Activated CD8-positive, alpha-beta T cell treated with anti-CD3 and anti-CD28 coated beads, Interleukin-2, amount 10 ng/mL, durations not matched to agents 7 days and 5 days (primary cell): ENCODE measurements at regions of chr10 and their contacts with region 1.

Region 1: DNA sequence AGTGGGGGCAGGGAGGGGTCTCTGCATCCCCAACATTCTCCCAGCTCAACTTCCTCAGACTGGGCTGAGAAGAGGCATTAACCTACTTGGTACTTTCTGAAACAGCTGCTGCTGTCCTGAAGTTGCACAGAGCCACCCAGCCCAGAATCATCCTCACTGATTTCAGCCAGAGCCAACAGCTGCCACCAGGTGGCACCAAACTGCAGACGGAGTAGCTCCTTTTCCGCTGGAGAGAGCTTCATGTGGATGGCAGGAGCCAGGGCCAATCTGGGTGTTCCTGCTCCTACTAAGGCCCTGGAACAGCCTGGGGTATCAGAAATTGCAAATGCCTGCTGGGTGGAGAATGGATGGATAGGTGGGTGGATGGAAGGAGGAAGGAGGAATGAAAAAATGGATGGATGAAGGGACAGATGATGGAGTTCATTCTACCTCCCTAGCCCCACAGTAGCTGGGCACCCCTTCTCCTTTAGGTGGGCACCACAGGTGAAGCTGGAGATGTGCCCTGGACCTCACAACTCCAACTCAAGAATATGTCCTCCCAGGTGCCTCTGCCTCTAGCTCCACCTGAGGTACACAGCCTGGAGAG is 11.8 kb upstream of the DRGX start:
- DNase-seq: peak; percentile 83
- ATAC-seq: peak; percentile 87
- H3K4me3 Mint-ChIP-seq: no peak overlapping the region
- H3K27ac Mint-ChIP-seq: no peak overlapping the region
- H3K4me1 Mint-ChIP-seq: no peaks in the 10 kb centered on the region
- H3K27me3 Mint-ChIP-seq: peaks cover 41% of the 10 kb centered on the region

Region 2: DNA sequence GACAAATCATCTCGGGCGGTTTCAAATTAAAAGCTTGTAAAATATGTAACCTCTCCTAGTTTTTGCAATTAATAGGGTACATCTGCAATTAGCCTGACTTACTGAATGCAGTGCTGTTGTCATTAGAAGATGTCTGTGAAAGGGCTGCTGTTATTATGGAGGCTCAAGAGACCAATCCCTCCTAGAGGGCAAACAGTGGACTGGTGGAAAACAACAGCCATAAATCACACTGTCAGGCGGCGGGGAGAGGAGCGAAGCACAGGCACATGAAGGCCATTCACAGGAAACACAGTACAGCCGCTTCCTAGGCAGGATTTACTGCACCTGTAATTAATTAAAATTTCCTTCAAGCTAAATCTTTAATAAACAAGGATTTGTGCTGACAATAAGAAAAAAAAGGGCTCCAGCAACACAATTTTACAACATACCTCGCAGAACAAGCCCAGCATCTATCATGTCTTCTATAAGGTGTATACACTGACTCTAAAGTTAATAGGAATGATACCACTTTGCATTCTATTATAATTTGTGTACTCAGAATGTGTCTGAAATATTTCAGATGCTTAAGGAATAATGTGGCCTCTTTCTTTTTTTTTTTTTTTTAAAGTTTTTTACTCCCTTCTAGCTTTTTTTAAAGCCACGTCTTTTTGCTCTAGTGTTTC is 80.5 kb after region 1 on chr10:
- CTCF ChIA-PET with region 1: interaction called, 11 read pairs
- POLR2A ChIA-PET with region 1: interaction called, 3 read pairs
- DNase-seq: no peak
- ATAC-seq: no peak
- H3K4me3 Mint-ChIP-seq: no peak overlapping the region
- H3K27ac Mint-ChIP-seq: no peak overlapping the region
- H3K4me1 Mint-ChIP-seq: peaks cover 23% of the 10 kb centered on the region
- H3K27me3 Mint-ChIP-seq: no peaks in the 10 kb centered on the region

Region 3: DNA sequence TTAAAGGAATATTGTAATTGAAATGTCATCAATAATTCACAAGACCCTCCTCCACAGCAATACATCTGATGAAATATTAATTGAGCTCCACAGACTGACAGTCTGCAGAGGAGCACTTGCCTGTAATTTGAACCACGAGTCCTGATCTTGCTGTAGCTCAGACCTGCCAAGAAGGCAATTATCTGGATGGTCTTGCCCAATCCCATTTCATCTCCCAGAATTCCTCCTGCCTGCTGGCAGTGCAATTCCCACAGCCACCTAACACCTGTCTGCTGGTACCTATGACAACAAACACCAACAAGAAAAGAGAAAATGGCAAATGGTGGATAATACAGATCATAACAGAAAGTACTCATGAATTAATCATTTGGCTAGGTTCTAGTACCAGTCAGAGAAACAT is 92.8 kb after region 1 on chr10:
- CTCF ChIA-PET with region 1: interaction called, 14 read pairs
- POLR2A ChIA-PET with region 1: no interaction called
- DNase-seq: no peak
- ATAC-seq: no peak
- H3K4me3 Mint-ChIP-seq: no peak overlapping the region
- H3K27ac Mint-ChIP-seq: no peak overlapping the region
- H3K4me1 Mint-ChIP-seq: peaks cover 12% of the 10 kb centered on the region
- H3K27me3 Mint-ChIP-seq: no peaks in the 10 kb centered on the region

Region 4: DNA sequence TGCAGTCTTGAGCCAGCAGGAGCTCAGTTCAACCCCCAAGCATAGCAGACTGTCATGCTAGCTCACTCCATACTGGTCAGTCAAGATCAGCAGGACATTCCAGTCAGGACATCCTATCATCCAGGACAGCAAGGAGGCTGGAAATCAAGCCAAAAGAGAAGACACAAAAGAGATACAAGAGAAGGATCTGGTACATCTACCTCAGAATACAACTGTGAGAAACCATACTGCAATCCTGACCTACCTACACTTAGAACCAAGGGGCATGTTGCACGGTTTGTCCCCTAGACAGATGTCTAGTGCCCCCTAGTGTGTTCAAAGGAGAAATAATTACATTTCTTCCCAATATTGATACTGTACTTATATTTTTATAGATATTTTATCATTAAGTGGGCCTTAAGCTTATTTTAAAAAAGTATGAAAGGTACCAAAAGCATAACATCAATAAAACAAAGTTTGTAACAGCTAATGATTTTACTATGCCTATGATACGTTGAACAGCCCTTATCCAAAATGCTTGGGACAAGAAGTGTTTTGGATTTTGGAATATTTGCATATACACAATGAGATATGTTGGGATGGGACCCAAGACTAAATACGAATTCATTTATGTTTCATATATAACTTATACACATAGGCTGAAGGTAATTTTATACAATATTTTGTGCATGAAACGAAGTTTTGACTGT is 104.6 kb after region 1 on chr10:
- CTCF ChIA-PET with region 1: interaction called, 224 read pairs
- POLR2A ChIA-PET with region 1: no interaction called
- DNase-seq: peak; percentile 47
- ATAC-seq: peak; percentile 51
- H3K4me3 Mint-ChIP-seq: no peak overlapping the region
- H3K27ac Mint-ChIP-seq: no peak overlapping the region
- H3K4me1 Mint-ChIP-seq: peaks cover 26% of the 10 kb centered on the region
- H3K27me3 Mint-ChIP-seq: peaks cover 4% of the 10 kb centered on the region

Region 5: GRCh38 chr10:49518982-49519578 is 111.4 kb after region 1 on chr10:
- CTCF ChIA-PET with region 1: interaction called, 224 read pairs
- POLR2A ChIA-PET with region 1: interaction called, 4 read pairs
- DNase-seq: peak; percentile 60
- ATAC-seq: no peak
- H3K4me3 Mint-ChIP-seq: no peak overlapping the region
- H3K27ac Mint-ChIP-seq: no peak overlapping the region
- H3K4me1 Mint-ChIP-seq: peaks cover 2% of the 10 kb centered on the region
- H3K27me3 Mint-ChIP-seq: no peaks in the 10 kb centered on the region

Region 6: DNA sequence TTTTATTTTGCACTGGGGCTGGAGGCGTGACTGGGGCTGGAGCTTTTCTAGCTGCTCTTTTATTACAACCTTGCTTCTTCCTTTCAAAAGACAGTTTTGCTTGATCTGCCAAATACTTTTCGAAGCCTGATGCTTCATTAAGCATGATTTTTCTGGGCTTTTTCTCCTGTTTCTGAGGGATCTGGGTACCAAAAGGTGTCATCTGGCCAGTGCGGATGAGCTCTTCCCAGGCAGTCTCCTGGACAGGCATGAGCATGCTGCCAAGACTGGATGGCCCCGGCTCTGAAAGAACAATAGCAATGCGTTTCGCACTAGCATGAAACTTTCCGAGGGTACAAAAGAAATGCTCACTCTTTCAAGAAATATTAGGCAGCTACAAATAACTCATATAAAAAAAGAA is 116.9 kb after region 1 on chr10:
- CTCF ChIA-PET with region 1: interaction called, 34 read pairs
- POLR2A ChIA-PET with region 1: interaction called, 4 read pairs
- DNase-seq: no peak
- ATAC-seq: no peak
- H3K4me3 Mint-ChIP-seq: no peak overlapping the region
- H3K27ac Mint-ChIP-seq: no peak overlapping the region
- H3K4me1 Mint-ChIP-seq: peaks cover 2% of the 10 kb centered on the region
- H3K27me3 Mint-ChIP-seq: no peaks in the 10 kb centered on the region

Region 7: DNA sequence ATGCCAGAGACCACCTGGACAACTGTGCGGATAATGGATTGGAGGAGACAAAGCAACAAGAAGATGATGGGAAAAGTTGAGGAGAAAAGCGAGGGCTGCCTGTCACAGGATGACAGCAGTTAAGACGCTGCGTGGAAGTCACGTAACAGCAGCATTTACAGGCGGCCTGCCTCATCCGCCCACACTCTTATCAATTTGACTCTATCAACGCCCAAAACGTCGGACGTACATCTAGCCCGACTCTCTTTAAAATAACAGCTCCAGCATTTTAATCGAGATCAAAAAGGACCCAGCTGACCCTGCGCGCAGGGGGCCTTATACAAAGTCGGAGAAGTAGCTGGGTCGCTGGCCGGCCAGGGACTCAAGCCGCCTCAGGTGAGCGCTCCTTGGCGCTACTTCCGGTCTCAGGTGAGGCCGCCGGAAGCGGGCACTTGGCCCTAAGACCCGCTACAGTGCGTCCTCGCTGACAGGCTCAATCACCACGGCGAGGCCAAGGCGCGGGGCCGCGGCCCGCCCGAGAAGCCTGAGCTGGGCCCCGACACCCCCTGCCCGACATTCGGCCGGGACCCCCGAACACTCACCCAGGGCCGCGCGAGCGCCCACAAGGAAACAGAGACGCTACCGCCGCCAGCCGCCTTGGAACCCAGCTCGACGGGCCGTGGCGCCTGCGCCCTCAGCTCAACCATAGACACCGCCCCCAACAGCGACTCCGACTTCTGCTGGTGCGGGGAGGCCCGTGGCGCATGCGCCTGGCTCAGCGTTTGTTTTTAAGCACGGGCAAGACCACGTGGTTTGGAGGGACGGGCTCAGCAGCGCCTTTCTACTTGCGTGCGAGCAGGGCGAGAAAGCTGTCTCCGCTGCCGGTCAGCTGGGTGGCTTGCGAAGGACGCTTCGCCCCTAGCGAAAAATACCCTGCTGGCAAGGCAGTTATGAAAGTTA is 131.0 kb after region 1 on chr10 and contains the start of gene ERCC6:
- CTCF ChIA-PET with region 1: interaction called, 11 read pairs
- POLR2A ChIA-PET with region 1: no interaction called
- DNase-seq: peak; percentile 98
- ATAC-seq: peak; percentile 98
- H3K4me3 Mint-ChIP-seq: peak within 1 kb of the TSS; percentile 90
- H3K27ac Mint-ChIP-seq: peak within 1 kb of the TSS; percentile 91
- H3K4me1 Mint-ChIP-seq: peaks cover 41% of the 10 kb centered on the region
- H3K27me3 Mint-ChIP-seq: peaks cover 9% of the 10 kb centered on the region
- total RNA-seq, gene ERCC6: 20.5 to 20.6 TPM

Region 8: DNA sequence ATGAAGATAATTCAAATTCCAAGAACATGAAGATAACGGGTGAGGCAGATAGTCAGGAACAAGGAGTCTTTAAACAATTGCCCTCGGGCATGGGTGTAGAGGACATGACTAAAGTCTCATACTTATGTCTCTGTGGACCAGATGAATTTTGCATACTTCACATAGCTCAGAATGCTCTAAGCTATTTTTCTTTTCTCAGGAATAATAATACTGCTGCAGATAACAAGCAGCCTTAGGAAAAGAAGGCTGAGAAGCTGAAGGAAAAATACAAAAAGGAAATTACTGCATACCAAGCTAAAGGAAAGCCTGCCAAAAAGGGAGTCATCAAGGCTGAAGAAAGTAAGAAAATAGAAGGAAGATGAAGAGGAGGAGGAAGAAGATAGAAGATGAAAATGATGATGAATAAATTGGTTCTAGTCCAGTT is 144.6 kb after region 1 on chr10:
- CTCF ChIA-PET with region 1: no interaction called
- POLR2A ChIA-PET with region 1: no interaction called
- DNase-seq: no peak
- ATAC-seq: no peak
- H3K4me3 Mint-ChIP-seq: no peak overlapping the region
- H3K27ac Mint-ChIP-seq: no peak overlapping the region
- H3K4me1 Mint-ChIP-seq: peaks cover 2% of the 10 kb centered on the region
- H3K27me3 Mint-ChIP-seq: peaks cover 18% of the 10 kb centered on the region